Adrenal gland (tissue), 19 donors: ENCODE measurements at regions of chr1 and their contacts with region 1.

Region 1: DNA sequence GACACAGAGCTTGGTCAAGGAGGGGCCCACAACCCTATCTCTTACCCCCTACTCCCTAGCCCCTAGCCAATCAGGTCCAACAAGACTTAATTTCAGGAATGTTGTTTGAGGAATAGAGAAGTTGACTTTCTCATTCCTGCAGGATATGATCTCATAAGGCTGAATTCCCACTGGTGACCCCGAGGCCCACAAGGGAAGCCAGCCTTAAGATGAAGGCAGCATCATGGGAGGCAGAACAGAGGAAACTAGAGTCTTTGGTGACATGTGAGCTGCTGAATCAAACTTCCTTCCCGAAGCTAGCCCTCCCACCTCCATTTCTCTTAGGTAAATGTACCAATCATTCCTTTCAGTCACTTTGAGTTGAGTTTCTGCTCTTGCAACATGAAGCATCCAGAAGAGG is 9.1 kb upstream of the PDIK1L start:
- DNase-seq: no peak
- H3K4me3 ChIP-seq: no peak overlapping the region
- H3K27ac ChIP-seq: no peak overlapping the region
- H3K4me1 ChIP-seq: no peaks in the 10 kb centered on the region
- H3K27me3 ChIP-seq: peaks cover 4% of the 10 kb centered on the region
- CTCF ChIP-seq: no peak
- POLR2A ChIP-seq: no peak

Region 2: DNA sequence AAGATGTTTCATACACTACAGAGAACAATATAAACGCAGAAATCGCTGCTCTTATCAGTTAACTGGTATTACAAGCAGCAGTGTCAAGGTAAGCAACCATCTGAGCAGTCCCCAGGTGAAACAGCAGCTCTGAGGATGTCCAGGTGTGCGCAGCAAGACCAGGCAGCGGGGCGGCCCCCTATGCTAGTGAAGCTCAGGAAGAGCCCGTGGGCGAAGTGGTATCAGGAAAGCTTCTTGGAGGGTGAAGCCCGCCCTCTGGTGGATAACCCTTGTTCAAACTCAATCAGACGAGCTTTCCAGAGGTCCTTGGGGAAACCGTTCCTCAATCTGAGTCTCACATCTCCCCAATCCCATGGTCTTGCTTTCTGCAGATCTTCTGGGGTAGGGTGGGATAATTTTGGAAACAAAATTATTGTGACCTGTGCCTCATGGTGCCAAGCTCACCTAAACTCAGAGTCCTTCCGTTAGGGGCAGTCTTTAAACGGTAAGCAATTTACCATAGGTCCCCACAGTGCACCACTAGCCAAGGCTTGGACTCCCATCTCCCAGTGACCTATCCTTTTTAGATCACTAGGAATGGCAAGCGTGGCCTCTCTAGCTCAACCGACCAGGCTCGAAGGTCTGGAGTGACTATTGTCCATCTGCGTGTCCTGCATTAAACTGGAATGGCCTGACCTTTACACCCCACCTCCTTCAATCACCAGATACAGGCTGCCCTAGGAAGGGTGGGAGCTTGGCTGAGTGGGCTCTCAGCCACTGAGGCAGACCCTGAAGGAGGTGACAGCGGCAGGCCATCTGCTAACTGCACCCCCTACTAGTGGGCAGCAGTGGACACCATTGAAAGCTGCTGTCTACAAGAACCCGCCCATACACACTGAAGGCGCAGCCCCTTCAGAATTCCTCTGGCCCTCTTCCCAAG is 42.8 kb after region 1 on chr1:
- intact Hi-C with region 1: loop called (anchors 2 to 5 kb)
- DNase-seq: peak; percentile 77 to 92 (median 85)
- H3K4me3 ChIP-seq: no peak overlapping the region
- H3K27ac ChIP-seq: no peak overlapping the region
- H3K4me1 ChIP-seq: peaks cover 0 to 2% of the 10 kb centered on the region in 2 donors
- H3K27me3 ChIP-seq: no peaks in the 10 kb centered on the region
- CTCF ChIP-seq: peak; percentile 66 to 83 (median 75)
- POLR2A ChIP-seq: no peak

Region 3: DNA sequence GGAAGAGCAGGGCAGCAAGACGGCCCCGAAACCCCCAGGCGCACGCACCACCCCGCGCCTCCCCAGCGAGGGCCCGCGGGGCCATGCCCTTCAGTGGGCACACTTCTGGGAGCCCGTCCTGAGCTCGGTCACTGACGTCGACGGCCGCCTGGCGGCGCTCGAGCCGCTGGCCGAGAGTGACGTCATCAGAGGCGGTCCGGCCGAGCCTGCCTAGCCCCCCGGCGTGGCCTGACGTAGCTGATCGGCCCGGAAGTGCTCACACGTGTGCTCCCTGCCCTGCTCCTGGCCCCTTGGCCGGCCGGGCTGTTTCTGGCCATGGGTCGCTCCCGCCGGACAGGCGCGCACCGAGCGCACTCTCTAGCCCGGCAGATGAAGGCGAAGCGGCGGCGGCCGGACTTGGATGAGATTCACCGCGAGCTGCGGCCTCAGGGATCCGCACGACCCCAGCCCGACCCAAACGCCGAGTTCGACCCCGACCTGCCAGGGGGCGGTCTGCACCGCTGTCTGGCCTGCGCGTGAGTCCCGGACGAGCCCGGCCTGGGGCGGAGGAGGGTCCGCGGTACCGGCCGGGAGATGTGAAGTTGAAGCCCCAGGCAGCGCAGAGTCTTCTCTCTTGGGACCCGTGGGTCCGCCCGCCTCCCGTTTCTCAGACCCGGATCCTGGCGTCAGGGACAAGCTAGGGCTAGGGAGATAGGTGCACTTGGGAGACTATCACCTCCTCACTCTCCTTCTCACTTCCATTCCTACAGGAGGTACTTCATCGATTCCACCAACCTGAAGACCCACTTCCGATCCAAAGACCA is 67.3 kb after region 1 on chr1 and contains the start of gene ZNF593:
- intact Hi-C with region 1: no loop called
- DNase-seq: peak; percentile 92 to 96 (median 94)
- H3K4me3 ChIP-seq: peak within 1 kb of the TSS; percentile 10 to 84 (median 54)
- H3K27ac ChIP-seq: peak within 1 kb of the TSS in 4 of 5 donors; percentile 33 to 86 (median 68)
- H3K4me1 ChIP-seq: peaks cover 7 to 15% of the 10 kb centered on the region in 2 donors
- H3K27me3 ChIP-seq: no peaks in the 10 kb centered on the region
- CTCF ChIP-seq: peak; percentile 75 to 97 (median 88)
- POLR2A ChIP-seq: peak; percentile 25 to 40
- total RNA-seq, gene ZNF593: 17.8 to 44.7 (median 30.6) TPM